Astrocyte of the cerebellum (primary cell): ENCODE measurements at regions of chr2 and their contacts with region 1.

Region 1: GRCh38 chr2:100013892-100014677 is 128.3 kb downstream of the AFF3 start:
- DNase-seq: peak; percentile 79
- H3K4me3 ChIP-seq: no peak overlapping the region
- CTCF ChIP-seq: peak; percentile 19

Region 2: DNA sequence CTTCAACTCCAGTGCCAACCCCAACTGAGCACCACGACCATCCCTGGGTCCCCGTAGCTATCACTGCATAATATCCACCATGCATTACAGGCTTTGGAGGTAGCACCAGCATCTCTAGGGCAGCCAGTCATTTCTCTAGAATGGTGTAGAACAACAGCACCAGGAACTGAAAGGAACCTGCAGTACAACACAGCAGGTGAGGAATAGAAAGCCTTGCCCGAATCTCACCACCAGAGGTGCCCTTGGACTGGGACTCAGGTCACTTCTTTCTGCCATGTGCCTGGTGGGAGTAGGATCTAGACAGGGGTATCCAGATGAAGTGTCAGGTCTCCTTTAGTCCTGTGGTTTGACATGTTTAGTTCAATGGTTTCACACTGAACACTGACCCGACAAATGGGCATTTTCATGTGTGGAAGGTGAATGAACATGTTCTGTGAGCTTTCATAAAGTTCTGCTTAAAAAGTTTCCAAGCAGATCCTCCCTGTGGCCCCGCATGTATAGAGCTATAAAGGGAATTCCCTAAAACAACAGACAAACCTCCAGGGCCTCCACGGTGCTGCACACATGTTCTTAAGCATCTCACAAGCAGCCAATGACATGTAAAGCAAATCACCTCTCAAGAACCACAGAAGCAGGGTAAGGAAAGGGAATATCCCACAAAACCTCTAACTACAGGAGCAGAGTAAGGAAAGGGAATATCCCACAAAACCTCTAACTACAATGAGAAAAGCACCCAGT is 80.0 kb before region 1 on chr2:
- in situ Hi-C with region 1: loop called (anchors 5 kb)
- DNase-seq: no peak
- H3K4me3 ChIP-seq: no peak overlapping the region
- CTCF ChIP-seq: no peak

Region 3: DNA sequence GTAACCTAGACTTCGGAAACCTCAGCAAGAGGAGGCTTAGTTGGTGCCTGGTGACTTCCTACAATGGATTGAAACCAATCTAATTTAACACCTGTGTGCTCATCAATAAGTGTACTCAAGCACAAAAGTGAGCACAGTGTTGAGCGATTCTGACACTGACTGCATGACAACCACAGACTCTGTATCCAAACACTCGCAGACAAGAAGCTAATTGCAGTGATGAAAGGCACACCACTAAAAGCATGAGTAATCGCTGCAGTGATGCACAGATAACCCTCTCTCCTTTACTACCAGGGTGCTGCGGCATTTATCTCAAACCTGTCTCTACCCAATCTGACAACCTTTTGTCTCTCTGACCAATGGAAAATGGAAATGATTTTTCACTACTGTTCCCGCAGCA is 39.8 kb before region 1 on chr2:
- in situ Hi-C with region 1: loop called (anchors 5 kb)
- DNase-seq: no peak
- H3K4me3 ChIP-seq: no peak overlapping the region
- CTCF ChIP-seq: no peak